ENCODE measurements at regions of chr9 and their contacts with region 1.

Region 1: DNA sequence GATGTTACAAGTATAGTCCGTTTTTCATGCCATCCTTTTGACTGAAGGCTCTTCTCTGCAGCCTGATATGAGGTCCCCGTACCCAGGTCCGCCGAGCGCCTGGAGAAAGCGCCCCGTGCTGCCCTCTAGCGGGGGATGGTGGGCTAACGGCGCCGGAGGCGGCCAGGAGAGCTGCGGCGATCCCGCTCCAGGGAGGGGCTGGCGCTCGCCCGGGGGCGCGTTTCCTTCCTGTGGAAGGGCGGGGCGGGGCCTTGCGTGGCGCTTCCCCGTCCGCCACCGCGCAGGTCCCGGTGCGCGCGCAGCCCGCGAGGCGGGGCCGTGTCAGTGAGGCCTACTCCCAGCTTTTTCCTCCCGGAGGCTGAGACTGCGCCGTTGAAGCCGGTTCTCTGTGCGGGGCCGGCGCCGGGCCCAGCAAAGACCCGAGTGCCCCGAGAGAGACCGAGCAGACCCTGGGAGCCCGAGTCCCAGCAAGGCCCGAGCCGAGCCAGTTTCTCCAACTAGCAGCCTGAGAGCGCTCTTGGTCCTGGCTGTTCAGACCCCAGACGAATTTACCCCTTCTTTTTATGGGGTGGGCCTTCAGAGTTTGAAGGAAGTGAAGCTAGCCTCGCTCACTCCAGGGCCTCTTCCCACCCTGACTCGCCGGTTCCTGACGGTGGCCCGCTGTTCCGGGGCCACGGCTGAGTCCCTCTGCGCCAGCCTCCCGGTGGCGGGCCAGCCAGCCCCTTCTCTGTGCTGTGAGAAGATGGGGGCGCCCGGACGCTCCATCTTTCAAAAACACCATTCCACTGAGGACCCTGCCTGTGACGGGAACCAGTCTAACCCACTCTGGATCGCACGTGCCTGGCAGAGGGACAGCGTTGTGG is 9.7 kb upstream of the PHF2 start:
- DNase-seq: peak; percentile 99
- ATAC-seq: peak; percentile 98
- H3K4me3 Mint-ChIP-seq: peak overlapping the region; percentile 83
- H3K27ac Mint-ChIP-seq: peak overlapping the region; percentile 89
- H3K4me1 Mint-ChIP-seq: peaks cover 24% of the 10 kb centered on the region
- H3K27me3 Mint-ChIP-seq: no peaks in the 10 kb centered on the region

Region 2: DNA sequence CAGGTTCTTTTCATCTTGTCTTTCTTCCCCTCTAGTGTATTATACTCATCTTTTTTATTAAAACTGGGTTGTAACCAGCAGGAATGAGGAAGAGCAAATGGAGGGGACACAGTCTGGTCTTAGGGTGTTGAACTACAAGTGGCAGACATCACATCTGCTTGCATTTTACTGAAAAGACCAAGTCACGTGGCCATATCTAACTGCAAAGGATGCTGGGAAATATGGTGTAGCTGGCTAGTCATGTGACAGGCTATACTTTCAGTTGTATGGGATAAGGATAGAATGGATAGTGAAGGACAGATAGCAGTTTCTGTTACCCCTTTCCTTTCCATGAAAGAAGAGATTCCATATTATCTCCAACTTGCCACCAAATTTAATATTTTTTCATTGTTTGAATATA is 632.3 kb before region 1 on chr9:
- CTCF ChIA-PET with region 1: no interaction called
- POLR2A ChIA-PET with region 1: no interaction called
- intact Hi-C with region 1: no loop called
- DNase-seq: no peak
- ATAC-seq: no peak
- H3K4me3 Mint-ChIP-seq: no peak overlapping the region
- H3K27ac Mint-ChIP-seq: no peak overlapping the region
- H3K4me1 Mint-ChIP-seq: no peaks in the 10 kb centered on the region
- H3K27me3 Mint-ChIP-seq: no peaks in the 10 kb centered on the region

Region 3: GRCh38 chr9:92954049-92954861 is 612.4 kb before region 1 on chr9:
- CTCF ChIA-PET with region 1: no interaction called
- POLR2A ChIA-PET with region 1: no interaction called
- intact Hi-C with region 1: loop called in 1 of 2 experiments (anchors 2 kb)
- DNase-seq: peak; percentile 89
- ATAC-seq: peak; percentile 85
- H3K4me3 Mint-ChIP-seq: peak overlapping the region; percentile 66
- H3K27ac Mint-ChIP-seq: peak overlapping the region; percentile 97
- H3K4me1 Mint-ChIP-seq: peaks cover 78% of the 10 kb centered on the region
- H3K27me3 Mint-ChIP-seq: no peaks in the 10 kb centered on the region

Region 4: GRCh38 chr9:93134015-93134739 is 432.5 kb before region 1 on chr9 and contains the start of gene NINJ1:
- CTCF ChIA-PET with region 1: interaction called, 4 read pairs
- POLR2A ChIA-PET with region 1: no interaction called
- intact Hi-C with region 1: loop called in 1 of 2 experiments (anchors 1 kb)
- DNase-seq: peak; percentile 95
- ATAC-seq: peak; percentile 83
- H3K4me3 Mint-ChIP-seq: peak within 1 kb of the TSS; percentile 88
- H3K27ac Mint-ChIP-seq: peak within 1 kb of the TSS; percentile 92
- H3K4me1 Mint-ChIP-seq: peaks cover 63% of the 10 kb centered on the region
- H3K27me3 Mint-ChIP-seq: no peaks in the 10 kb centered on the region
- total RNA-seq, gene NINJ1: 77.4 to 108 TPM

Region 5: DNA sequence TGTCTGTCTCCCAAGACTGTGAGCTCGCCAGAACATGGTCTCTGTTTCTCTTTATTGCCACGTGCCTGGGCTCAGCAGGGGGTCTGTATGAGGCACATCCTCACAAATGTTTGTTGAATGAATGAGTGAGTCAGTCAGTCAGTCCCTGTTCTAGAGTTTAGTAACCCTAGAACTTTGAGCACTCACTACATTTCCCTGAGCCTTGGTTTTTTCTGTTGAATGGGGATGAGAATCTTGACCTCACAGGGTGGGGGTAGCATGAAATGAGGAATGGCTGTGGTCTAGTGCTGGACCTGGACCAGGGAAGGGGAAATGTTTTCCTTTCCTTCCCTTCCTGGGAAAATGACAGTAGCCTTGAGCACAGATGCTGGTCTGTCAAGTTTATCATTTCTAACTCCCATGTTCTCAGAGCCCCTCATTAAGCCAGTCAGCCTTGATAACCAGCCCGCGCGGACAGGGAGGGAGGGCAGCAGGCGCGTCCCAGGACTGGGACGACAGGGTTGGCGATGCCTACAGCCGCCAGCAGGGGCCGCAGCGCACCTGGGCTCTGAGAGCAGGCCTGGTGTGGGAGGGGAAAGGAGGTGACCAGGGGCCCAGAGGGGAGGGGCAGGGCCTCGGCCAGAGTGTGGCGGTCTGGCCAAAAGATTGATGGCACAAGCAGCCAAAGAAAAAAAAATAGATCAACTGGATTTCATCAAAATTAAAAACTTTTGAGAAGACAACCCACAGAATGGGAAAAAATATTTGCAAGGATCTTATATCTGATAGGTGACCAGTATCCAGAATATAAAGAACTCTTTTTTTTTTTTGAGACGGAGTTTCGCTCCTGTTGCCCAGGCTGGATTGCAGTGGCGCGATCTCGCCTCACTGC is 406.8 kb before region 1 on chr9:
- CTCF ChIA-PET with region 1: interaction called, 4 read pairs
- POLR2A ChIA-PET with region 1: no interaction called
- intact Hi-C with region 1: loop called in 1 of 2 experiments (anchors 1 kb)
- DNase-seq: peak; percentile 86
- ATAC-seq: peak; percentile 68
- H3K4me3 Mint-ChIP-seq: no peak overlapping the region
- H3K27ac Mint-ChIP-seq: no peak overlapping the region
- H3K4me1 Mint-ChIP-seq: peaks cover 26% of the 10 kb centered on the region
- H3K27me3 Mint-ChIP-seq: no peaks in the 10 kb centered on the region

Region 6: GRCh38 chr9:93531374-93531773 is 35.3 kb before region 1 on chr9:
- CTCF ChIA-PET with region 1: interaction called, 10 read pairs
- POLR2A ChIA-PET with region 1: no interaction called
- intact Hi-C with region 1: no loop called
- DNase-seq: no peak
- ATAC-seq: no peak
- H3K4me3 Mint-ChIP-seq: no peak overlapping the region
- H3K27ac Mint-ChIP-seq: no peak overlapping the region
- H3K4me1 Mint-ChIP-seq: no peaks in the 10 kb centered on the region
- H3K27me3 Mint-ChIP-seq: no peaks in the 10 kb centered on the region

Region 7: DNA sequence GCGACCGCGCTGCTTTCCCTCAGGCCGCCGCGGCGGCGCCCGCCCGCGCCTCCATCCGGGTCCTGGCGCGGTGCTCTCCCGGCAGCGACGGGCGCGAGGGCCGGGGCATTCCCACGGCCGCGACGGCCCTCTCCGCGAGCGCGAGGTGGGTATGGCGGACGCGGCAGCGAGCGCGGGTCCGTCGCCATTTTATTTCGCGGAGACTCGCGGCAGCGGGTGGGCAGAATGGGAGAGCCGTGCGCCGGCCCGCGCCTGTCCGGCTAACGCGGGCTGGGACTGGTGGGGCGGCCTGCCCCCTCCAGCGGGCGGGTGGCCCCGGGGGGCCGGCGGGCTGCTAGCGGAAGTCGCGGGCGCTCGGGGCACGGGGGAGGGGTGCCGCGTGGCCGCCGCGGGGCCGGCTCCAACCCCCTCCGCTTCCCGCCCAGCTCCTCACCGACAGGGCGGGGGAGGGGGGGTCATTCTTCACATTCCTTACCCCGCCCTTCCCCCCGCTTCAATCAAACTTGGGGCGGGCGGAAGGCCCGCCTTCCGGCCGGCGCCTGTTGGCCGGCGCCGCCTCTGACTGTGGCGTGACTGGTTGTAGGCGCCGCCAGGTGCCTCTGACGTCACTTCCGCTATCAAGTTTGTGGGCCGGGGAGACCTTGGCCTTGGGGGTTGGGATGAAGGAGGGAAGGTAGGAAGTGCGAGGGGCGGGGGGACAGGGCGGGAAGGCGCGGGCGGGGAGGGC is 599.8 kb after region 1 on chr9:
- CTCF ChIA-PET with region 1: no interaction called
- POLR2A ChIA-PET with region 1: no interaction called
- intact Hi-C with region 1: loop called in 1 of 2 experiments (anchors 1 kb)
- DNase-seq: peak; percentile 97
- ATAC-seq: peak; percentile 65
- H3K4me3 Mint-ChIP-seq: peak overlapping the region; percentile 89
- H3K27ac Mint-ChIP-seq: peak overlapping the region; percentile 91
- H3K4me1 Mint-ChIP-seq: peaks cover 34% of the 10 kb centered on the region
- H3K27me3 Mint-ChIP-seq: no peaks in the 10 kb centered on the region

Measured in activated CD4-positive, alpha-beta T cell treated with anti-CD3 and anti-CD28 coated beads for 36 hours (primary cell).